GM10248 (cell line): ENCODE measurements at regions of chr2 and their contacts with region 1.

Region 1: GRCh38 chr2:227862227-227862740 is 9.1 kb upstream of the DAW1 start:
- DNase-seq: peak; percentile 57
- CTCF ChIP-seq: peak; percentile 85

Region 2: DNA sequence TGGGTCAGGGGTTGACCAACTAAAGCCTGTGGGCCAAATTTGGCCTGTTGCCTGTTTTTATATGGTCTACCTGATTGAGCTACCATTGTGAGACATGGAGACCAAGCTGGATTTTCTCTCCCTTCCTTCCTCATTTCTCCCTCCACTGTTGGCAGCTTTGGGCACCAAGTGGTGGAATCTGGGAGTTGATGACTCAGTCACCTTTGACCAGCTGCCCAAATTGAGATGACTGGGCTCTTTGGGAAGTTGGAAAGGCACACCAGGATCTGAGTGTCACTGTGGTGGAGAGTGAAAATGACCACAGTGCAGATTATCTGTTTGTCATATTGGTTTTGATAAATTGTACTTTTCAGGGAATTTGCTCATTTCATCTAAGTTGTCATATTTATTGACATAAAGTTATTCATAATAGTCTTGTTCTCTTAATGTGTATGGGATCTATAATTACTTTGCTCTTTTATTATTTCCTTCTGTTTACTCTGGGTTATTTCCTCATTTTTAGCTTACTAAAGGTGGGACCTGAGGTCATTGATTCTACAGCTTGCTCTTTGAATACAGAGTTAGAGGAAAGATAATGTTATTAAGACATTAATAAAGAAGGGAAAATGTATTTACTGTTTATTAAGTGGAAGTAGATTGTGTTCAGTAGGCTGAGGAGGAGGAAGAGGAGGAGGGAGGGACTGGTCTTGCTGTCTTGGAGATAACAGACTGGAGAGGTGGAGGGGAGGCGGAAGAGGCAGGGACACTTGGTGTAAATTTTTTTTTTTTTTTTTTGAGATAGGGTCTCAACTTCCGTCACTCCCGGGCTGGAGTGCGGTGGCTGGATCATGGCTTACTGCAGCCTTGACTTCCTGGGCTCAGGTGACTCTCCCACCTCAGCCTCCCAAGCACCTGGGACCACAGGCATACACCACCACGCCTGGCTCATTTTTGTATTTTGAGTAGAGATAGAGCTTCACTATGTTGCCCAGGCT is 358.6 kb before region 1 on chr2:
- CTCF ChIA-PET with region 1: no interaction called
- POLR2A ChIA-PET with region 1: no interaction called
- DNase-seq: no peak
- CTCF ChIP-seq: no peak

Region 3: DNA sequence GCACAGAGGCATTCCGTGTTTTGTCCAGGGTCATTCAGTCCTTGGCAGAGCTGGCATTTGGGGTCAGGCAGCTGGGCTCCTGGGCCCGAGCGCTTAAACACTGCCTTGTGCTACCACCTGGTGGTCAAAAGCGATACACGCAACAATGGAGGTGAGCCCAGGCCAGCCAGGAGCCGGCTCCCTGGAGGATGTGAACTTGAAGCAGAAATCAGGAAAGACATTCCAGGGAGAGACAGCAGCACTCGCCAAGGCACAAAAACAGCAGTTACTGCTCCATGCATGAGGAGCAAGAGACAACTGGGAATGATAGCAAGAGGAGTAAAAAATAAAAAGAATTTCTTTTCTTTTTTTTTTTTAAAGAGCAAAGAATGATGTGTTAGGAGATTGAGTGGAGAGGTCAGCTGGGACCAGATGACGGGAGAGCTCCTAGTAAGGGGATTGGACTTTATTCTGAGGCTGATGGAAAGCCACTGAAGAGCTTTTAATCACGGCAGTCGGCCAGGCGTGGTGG is 95.9 kb before region 1 on chr2:
- CTCF ChIA-PET with region 1: interaction called, 43 read pairs
- POLR2A ChIA-PET with region 1: no interaction called
- DNase-seq: peak; percentile 79
- CTCF ChIP-seq: peak; percentile 89

Region 4: GRCh38 chr2:227774011-227774624 is 88.2 kb before region 1 on chr2:
- CTCF ChIA-PET with region 1: interaction called, 43 read pairs
- POLR2A ChIA-PET with region 1: no interaction called
- DNase-seq: peak; percentile 41
- CTCF ChIP-seq: peak; percentile 15

Region 5: GRCh38 chr2:227783404-227784138 is 78.7 kb before region 1 on chr2:
- CTCF ChIA-PET with region 1: interaction called, 17 read pairs
- POLR2A ChIA-PET with region 1: no interaction called
- DNase-seq: peak; percentile 79
- CTCF ChIP-seq: no peak

Region 6: DNA sequence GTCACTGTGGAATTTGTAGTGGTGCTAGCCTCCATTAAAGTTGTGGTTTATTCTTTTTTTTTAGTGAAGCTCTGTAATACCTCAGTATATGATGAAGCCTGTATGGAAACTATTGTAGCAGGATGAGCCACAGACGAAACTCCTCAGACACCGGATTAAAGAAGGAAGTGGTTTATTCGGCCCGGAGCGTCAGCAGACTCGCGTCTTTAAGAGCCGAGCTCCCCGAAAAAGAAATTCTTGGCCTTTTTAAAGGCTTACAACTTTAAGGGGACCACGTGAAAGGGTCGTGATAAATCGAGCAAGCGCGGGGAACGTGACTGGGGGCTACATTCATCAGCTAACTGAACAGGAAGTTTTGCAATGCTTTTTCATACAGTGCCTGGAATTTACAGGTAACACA is 56.7 kb before region 1 on chr2:
- CTCF ChIA-PET with region 1: interaction called, 12 read pairs
- POLR2A ChIA-PET with region 1: no interaction called
- DNase-seq: no peak
- CTCF ChIP-seq: no peak

Region 7: DNA sequence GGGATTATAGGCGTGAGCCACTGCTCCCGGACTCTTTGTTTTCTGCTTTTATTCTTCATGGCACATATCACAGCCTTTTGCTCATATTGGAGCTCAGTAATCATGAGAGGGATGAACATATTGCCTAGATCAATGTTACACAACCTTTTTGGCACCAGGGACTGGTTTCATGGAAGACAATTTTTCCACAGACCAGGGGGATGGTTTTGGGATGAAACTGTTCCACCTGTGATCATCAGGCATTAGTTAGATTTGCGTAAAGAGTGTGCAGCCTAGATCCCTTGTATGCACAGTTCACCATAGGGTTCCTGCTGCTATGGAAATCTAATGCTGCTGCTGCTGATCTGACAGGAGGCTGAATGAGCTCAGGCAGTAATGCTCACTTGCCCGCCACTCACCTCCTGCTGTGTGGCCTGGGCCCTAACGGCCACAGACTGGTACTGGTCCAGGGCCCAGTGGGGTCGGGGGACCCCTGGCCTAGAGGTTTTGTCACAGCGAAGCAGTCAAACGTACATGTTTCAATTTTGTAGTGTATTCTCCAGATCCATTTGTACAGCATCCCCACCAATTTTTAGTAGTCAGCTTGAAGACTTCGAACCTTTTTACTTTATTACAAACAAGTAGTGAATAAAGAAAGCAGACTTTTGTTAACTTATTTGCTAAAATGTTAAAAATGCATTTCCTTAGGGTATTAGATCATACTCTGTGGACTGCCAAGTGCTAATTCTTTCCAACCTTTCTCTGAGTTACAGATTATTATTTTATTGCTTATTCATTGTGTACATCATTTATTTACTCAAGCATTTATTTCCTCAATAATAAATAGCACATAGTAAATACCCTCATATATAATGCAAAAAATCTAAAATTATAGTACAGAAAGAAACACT is 15.4 kb after region 1 on chr2:
- CTCF ChIA-PET with region 1: interaction called, 50 read pairs
- POLR2A ChIA-PET with region 1: no interaction called
- DNase-seq: no peak
- CTCF ChIP-seq: no peak

Region 8: DNA sequence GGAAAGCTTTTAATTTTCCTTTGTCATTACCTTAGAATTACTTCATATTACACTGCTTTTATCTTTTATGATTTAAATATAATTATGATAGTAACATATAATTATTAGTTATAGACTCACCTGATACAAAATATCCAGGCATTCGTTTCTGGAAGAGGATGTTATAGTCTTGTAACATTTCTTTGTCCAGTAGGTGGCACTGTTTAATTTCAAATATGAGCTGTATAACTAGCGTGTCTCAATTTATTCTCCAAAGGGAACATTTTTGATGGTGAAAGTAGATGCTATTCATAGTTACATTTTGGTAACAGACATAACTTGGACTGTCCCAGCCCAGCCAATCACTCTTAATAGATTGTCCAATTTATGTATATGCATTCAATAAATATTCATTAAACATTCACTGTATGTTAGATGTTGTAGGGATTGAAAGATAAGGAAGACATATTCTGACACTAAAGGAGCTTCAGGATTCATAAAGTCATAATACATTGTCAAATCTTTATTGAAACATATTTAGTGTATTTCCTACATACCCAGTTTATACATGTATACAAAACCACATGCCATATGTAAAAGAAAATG is 28.3 kb after region 1 on chr2:
- CTCF ChIA-PET with region 1: interaction called, 15 read pairs
- POLR2A ChIA-PET with region 1: no interaction called
- DNase-seq: peak; percentile 34
- CTCF ChIP-seq: peak; percentile 57